ENCODE measurements at regions of chrX and their contacts with region 1.

Region 1: DNA sequence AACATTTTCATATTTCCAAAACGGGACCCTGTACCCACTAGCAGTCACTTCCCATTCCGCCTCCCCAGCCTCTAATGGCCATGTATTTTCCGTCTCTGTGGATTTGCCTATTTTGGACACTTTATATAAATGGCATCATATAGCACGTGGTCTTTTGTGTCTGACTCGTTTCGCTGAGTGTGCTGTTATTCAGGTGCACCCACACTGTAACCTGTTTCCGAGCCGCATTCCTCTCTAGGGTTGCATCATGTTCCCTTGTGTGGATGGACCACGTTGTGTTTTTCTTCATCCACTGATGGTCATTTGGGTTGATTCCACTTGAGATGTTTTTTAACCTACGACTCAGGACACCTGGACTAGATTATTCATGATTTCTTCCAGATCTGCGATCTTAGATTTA is 85.1 kb upstream of the PRKX start:
- DNase-seq: no peak
- H3K4me3 ChIP-seq: no peak overlapping the region
- H3K27ac ChIP-seq: no peak overlapping the region
- H3K4me1 ChIP-seq: no peaks in the 10 kb centered on the region
- H3K27me3 ChIP-seq: peaks cover 50% of the 10 kb centered on the region
- CTCF ChIP-seq: no peak

Region 2: DNA sequence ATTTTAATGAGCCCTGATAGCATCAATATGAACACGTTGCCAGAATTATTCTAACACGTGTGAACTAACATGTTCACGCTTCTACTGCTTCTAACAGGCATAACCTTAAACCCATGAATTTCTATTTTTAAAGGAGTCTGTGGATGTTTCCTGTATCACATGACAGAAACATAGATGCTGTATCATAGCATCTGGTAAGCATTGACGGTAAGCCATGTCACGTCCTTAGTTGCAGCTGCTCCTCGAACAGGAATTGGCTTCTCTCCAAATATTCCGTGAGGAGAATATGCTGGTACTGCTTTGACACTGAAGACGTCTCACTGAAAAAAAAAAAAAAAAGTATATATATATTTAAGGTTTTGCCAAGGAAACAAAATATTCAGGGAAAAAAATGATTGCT is 347.0 kb before region 1 on chrX:
- CTCF ChIA-PET with region 1: no interaction called
- POLR2A ChIA-PET with region 1: no interaction called
- intact Hi-C with region 1: no loop called
- DNase-seq: no peak
- H3K4me3 ChIP-seq: no peak overlapping the region
- H3K27ac ChIP-seq: no peak overlapping the region
- H3K4me1 ChIP-seq: no peaks in the 10 kb centered on the region
- H3K27me3 ChIP-seq: no peaks in the 10 kb centered on the region
- CTCF ChIP-seq: no peak

Region 3: GRCh38 chrX:5042563-5042962 is 1244.0 kb after region 1 on chrX:
- CTCF ChIA-PET with region 1: interaction called, 10 read pairs
- POLR2A ChIA-PET with region 1: no interaction called
- intact Hi-C with region 1: no loop called
- DNase-seq: no peak
- H3K4me3 ChIP-seq: no peak overlapping the region
- H3K27ac ChIP-seq: no peak overlapping the region
- H3K4me1 ChIP-seq: no peaks in the 10 kb centered on the region
- H3K27me3 ChIP-seq: no peaks in the 10 kb centered on the region
- CTCF ChIP-seq: no peak

Measured in PC-9 (cell line).